AG04450 (cell line): ENCODE measurements at regions of chr5 and their contacts with region 1.

Region 1: GRCh38 chr5:157948738-157949410 is 89.9 kb upstream of the CLINT1 start:
- DNase-seq: peak; percentile 85
- H3K4me3 ChIP-seq: no peak overlapping the region
- H3K27ac ChIP-seq: no peak overlapping the region
- H3K27me3 ChIP-seq: no peaks in the 10 kb centered on the region
- CTCF ChIP-seq: peak; percentile 94

Region 2: GRCh38 chr5:157761690-157762621 is 186.9 kb before region 1 on chr5:
- CTCF ChIA-PET with region 1: interaction called, 35 read pairs
- POLR2A ChIA-PET with region 1: no interaction called
- DNase-seq: no peak
- H3K4me3 ChIP-seq: no peak overlapping the region
- H3K27ac ChIP-seq: no peak overlapping the region
- H3K27me3 ChIP-seq: no peaks in the 10 kb centered on the region
- CTCF ChIP-seq: peak; percentile 82

Region 3: GRCh38 chr5:157812086-157812485 is 136.8 kb before region 1 on chr5:
- CTCF ChIA-PET with region 1: interaction called, 80 read pairs
- POLR2A ChIA-PET with region 1: no interaction called
- DNase-seq: no peak
- H3K4me3 ChIP-seq: no peak overlapping the region
- H3K27ac ChIP-seq: no peak overlapping the region
- H3K27me3 ChIP-seq: no peaks in the 10 kb centered on the region
- CTCF ChIP-seq: no peak

Region 4: DNA sequence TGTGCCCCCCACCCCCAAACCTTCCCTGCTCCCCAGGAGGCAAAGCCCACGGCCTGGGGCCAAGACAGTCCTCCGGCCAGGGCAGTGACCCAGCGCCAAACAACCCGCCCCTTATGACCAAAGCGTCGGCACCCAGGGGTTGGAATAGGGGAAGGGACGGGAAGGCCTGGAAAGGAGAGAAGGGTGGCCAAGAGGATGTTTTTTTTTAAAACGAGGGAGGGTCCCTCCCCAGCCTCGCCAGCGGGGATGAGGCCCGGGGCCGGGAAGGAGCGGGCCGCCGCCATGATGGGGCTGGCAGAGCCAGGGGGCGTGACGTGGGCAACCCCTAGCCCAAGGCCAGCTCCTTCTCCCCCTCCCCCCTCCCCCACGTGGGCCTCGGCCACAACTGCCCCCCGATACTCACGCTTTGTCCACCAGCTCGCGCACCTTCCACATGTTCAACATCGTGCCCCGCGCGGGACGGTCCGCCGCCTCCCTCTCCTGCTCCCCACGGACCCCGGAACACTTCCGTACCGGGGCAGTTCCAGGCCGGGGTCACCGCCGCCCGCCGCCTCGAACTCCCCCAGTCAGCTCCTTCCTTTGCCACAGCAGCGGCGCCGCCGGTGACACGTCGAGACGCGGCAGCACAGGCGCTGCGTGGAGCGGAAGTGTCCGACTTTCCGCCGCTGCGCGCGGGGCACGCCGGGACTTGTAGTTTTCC is 90.2 kb before region 1 on chr5 and contains the start of gene CLINT1:
- CTCF ChIA-PET with region 1: interaction called, 52 read pairs
- POLR2A ChIA-PET with region 1: no interaction called
- DNase-seq: peak; percentile 41
- H3K4me3 ChIP-seq: peak within 1 kb of the TSS; percentile 92
- H3K27ac ChIP-seq: peak within 1 kb of the TSS; percentile 77
- H3K27me3 ChIP-seq: no peaks in the 10 kb centered on the region
- CTCF ChIP-seq: no peak
- polyA plus RNA-seq, gene CLINT1: 103 and 107 TPM in 2 replicates

Region 5: DNA sequence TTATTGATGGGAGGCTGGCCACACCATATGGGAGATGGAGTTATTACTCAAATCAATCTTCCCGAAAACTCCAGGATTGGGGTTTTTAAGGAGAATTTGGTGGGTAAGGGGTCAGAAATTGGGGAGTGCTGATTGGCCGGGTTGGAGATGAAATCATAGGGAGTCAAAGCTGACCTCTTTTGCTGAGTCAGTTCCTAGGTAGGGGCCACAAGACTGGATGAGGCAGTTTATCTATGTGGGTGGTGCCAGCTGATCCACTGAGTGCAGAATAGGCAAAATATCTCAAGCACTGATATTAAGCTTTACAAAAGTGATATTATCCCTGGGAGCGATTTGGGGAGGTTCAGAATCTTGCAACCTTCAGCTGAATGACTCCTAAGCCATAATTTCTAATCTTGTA is 14.3 kb before region 1 on chr5:
- CTCF ChIA-PET with region 1: interaction called, 26 read pairs
- POLR2A ChIA-PET with region 1: no interaction called
- DNase-seq: no peak
- H3K4me3 ChIP-seq: no peak overlapping the region
- H3K27ac ChIP-seq: no peak overlapping the region
- H3K27me3 ChIP-seq: no peaks in the 10 kb centered on the region
- CTCF ChIP-seq: no peak

Region 6: DNA sequence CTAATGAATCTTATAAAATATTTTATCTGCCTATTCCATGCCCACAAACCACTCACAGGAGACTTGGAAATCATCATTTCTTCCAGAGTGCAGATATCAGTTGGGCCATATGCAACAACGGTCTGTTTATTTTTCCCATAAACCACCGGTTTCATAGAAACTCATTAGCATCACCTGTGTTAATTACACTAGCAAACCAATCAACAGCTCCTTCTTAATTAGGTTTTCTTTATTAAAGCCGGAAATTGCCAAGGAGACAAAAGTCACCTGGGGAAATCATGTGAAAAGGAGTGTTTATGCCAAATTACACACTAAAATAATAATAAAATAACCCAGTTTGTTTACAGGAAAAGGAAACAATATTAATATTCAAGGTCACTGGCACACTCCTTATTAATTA is 1021.2 kb after region 1 on chr5:
- CTCF ChIA-PET with region 1: interaction called, 10 read pairs
- POLR2A ChIA-PET with region 1: no interaction called
- DNase-seq: no peak
- H3K4me3 ChIP-seq: no peak overlapping the region
- H3K27ac ChIP-seq: no peak overlapping the region
- H3K27me3 ChIP-seq: peaks cover 2% of the 10 kb centered on the region
- CTCF ChIP-seq: no peak